ENCODE measurements at regions of chr2 and their contacts with region 1.

Region 1: GRCh38 chr2:63841254-63842022 is at the start of gene UGP2:
- DNase-seq: peak; percentile 91
- ATAC-seq: peak; percentile 52 to 54
- H3K4me3 ChIP-seq: peak within 1 kb of the TSS; percentile 75 to 95 (median 92)
- H3K27ac ChIP-seq: peak within 1 kb of the TSS; percentile 94 to 99 (median 98)
- H3K4me1 ChIP-seq: peaks cover 46 to 53% of the 10 kb centered on the region in 2 donors
- H3K27me3 ChIP-seq: no peaks in the 10 kb centered on the region
- CTCF ChIP-seq: peak in 1 of 5 experiments; percentile 12
- POLR2A ChIP-seq: peak; percentile 79 to 91
- total RNA-seq, gene UGP2: 398 to 784 (median 580) TPM

Region 2: DNA sequence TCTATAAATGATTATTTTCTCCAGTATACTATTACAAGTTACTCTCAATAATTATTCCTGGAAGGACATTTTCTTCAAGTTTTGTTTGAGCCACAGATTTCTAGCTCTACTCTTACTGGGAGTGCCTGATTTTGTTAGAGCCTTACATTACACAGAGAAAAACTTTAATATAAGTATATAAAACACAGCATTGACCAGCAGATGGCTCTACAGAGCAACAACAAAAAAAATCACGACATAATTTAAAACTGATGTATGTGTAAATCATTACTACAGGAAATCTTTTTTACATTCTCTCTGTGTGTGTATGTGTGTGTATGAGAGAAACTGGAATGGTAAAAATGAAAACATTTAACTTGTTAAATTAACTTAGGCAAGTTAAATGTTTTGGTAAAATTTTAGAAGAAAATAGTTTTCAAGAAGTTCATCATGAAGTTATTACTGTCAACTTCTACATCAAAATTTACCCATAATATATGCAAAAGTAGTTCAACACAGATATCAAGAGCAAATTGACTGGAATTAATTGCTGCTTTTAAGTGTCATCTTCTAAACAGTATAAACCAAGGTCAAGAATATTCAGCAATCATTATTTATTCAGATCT is 149.3 kb before region 1 on chr2:
- in situ Hi-C with region 1: no loop called
- intact Hi-C with region 1: loop called (anchors 5 kb)
- DNase-seq: no peak
- ATAC-seq: peak; percentile 56 to 57
- H3K4me3 ChIP-seq: no peak overlapping the region
- H3K27ac ChIP-seq: no peak overlapping the region
- H3K4me1 ChIP-seq: peaks cover 0 to 4% of the 10 kb centered on the region in 2 donors
- H3K27me3 ChIP-seq: no peaks in the 10 kb centered on the region
- CTCF ChIP-seq: peak; percentile 50 to 73 (median 54)
- POLR2A ChIP-seq: no peak

Region 3: GRCh38 chr2:63743982-63744966 is 97.2 kb before region 1 on chr2:
- in situ Hi-C with region 1: no loop called
- intact Hi-C with region 1: loop called (anchors 1 kb)
- DNase-seq: no peak
- ATAC-seq: peak; percentile 3 to 25
- H3K4me3 ChIP-seq: peak overlapping the region in 1 of 4 donors; percentile 14
- H3K27ac ChIP-seq: peak overlapping the region; percentile 77 to 86 (median 83)
- H3K4me1 ChIP-seq: peaks cover 33 to 37% of the 10 kb centered on the region in 2 donors
- H3K27me3 ChIP-seq: no peaks in the 10 kb centered on the region
- CTCF ChIP-seq: no peak
- POLR2A ChIP-seq: no peak

Region 4: DNA sequence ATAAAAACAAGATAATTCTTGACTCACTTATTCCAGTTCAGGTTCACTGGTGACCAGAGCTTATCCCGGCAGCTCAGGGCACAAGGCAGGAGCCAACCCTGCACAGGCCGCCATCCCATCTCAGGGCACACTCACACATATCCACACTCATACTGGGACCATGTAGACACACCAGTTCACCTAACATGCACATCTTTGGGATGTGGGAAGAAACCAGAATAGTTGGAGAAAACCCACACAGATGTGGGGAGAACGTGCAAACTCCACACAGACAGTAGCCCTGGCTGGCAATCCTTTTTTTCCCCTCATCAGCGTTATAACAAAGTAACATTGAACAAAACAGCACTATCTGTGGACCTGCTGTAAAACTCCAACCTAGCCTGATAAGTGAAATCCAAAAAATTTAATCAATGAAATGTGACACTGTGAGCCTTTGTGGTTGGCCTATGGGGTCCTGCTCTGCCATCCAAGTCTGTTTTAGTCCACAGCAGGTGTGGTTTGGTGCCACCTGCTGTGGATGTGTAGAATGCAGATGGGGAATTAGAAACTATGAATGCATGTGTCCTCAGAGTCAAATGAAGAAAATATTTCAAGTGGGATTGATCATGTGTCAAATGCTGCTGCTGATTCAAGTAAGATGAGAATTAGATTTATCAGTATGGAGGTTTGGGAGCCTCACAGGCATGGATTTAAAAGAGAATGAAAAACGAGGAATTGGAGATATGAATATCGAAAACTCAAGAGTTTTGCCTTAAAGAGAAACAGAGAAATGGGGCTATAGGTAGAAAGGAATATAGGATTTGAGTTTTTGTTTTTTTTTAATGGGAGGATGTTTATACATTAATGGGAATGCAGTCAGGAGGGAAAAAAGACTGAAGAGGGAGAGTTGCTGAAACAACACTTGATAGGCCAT is 47.3 kb after region 1 on chr2:
- in situ Hi-C with region 1: no loop called
- intact Hi-C with region 1: loop called (anchors 1 kb)
- DNase-seq: peak; percentile 40 to 48
- ATAC-seq: peak; percentile 72 to 84
- H3K4me3 ChIP-seq: no peak overlapping the region
- H3K27ac ChIP-seq: peak overlapping the region; percentile 78 to 90 (median 83)
- H3K4me1 ChIP-seq: peaks cover 32 to 44% of the 10 kb centered on the region in 2 donors
- H3K27me3 ChIP-seq: no peaks in the 10 kb centered on the region
- CTCF ChIP-seq: peak; percentile 73 to 85 (median 78)
- POLR2A ChIP-seq: no peak

Region 5: GRCh38 chr2:64144057-64145013 is 302.9 kb after region 1 on chr2 and contains the start of gene PELI1:
- in situ Hi-C with region 1: no loop called
- intact Hi-C with region 1: loop called (anchors 10 kb)
- DNase-seq: peak; percentile 94 to 96
- ATAC-seq: peak; percentile 93 to 95
- H3K4me3 ChIP-seq: peak within 1 kb of the TSS; percentile 83 to 100 (median 95)
- H3K27ac ChIP-seq: peak within 1 kb of the TSS; percentile 91 to 99 (median 96)
- H3K4me1 ChIP-seq: peaks cover 3 to 11% of the 10 kb centered on the region in 2 donors
- H3K27me3 ChIP-seq: no peaks in the 10 kb centered on the region
- CTCF ChIP-seq: peak in 2 of 5 experiments; percentile 13 to 30
- POLR2A ChIP-seq: peak; percentile 94 to 97
- total RNA-seq, gene PELI1: 3.7 to 7.5 (median 5.9) TPM